ENCODE measurements at regions of chr5 and their contacts with region 1.

Region 1: GRCh38 chr5:99037668-99038067 is 108.9 kb upstream of the CHD1 start:
- DNase-seq: peak; percentile 78 to 85 (median 81)
- H3K4me3 ChIP-seq: peak overlapping the region; percentile 3 to 52
- H3K4me3 Mint-ChIP-seq: peak overlapping the region; percentile 34 to 83 (median 64)
- H3K27ac ChIP-seq: peak overlapping the region; percentile 48
- H3K27ac Mint-ChIP-seq: peak overlapping the region; percentile 83 to 93 (median 89)
- H3K4me1 ChIP-seq: peaks cover 62% of the 10 kb centered on the region
- H3K4me1 Mint-ChIP-seq: peaks cover 48 to 82% (median 61%) of the 10 kb centered on the region in 4 donors
- H3K27me3 ChIP-seq: no peaks in the 10 kb centered on the region
- H3K27me3 Mint-ChIP-seq: no peaks in the 10 kb centered on the region

Region 2: DNA sequence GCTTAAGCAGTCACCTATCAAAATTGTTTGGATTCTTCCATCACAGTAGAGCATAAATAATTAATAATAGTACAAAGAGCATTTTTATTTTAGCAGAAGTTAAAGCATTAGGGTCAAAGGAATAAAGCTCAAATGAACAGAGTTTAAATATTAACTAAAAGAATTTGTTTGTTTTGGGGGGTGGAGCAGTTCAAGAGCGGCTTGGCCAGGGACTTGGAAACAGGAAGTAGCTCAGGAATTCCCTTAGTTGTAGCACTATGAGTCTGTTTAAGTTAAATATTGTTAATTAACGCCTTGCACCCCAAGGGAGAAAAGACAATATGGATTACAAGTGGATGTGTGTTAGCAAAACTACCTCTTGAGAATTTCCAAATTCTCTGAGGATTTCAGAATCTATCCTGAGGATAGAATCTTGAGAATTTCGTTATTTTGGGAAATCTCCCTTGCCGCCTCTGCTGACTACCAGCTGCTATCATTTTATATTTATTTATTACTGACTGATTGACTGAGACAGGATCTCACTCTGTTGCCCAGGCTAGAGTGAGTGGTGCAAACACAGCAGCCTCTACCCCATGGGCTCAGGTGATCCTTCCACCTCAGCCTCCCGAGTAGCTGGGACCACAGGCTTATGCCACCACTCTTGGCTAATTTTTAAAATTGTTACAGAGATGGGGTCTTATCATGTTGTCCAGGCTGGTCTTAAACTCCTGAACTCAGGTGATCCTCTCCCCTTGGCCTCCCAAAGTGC is 12.2 kb before region 1 on chr5:
- CTCF ChIA-PET with region 1: interaction called, 4 read pairs
- POLR2A ChIA-PET with region 1: interaction called, 16 read pairs
- intact Hi-C with region 1: loop called (anchors 2 kb)
- DNase-seq: no peak
- H3K4me3 ChIP-seq: no peak overlapping the region
- H3K4me3 Mint-ChIP-seq: no peak overlapping the region
- H3K27ac ChIP-seq: no peak overlapping the region
- H3K27ac Mint-ChIP-seq: no peak overlapping the region
- H3K4me1 ChIP-seq: peaks cover 17% of the 10 kb centered on the region
- H3K4me1 Mint-ChIP-seq: peaks cover 21 to 38% (median 27%) of the 10 kb centered on the region in 4 donors
- H3K27me3 ChIP-seq: no peaks in the 10 kb centered on the region
- H3K27me3 Mint-ChIP-seq: no peaks in the 10 kb centered on the region

Region 3: DNA sequence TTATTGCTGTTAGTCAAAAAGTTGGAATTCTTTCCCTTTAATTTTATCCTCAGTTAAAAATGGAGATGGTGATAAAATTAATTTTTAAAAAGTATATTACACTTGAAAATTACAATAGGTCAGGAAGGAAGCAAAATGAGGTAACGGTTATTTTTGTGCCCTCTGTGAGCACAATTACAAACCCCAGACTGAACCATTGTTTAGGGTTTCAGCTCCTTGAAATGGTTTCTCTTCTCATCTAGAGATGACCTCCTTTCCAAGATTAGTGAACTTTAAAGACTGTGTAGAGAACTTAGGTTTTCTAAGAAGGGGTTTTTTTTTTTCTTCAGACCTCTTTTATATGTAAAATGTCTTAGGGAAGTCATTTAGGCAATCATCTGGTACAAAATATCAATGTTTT is 17.3 kb after region 1 on chr5:
- CTCF ChIA-PET with region 1: interaction called, 37 read pairs
- POLR2A ChIA-PET with region 1: interaction called, 25 read pairs
- intact Hi-C with region 1: loop called (anchors 1 kb)
- DNase-seq: peak in 3 of 5 donors; percentile 15 to 38 (median 32)
- H3K4me3 ChIP-seq: no peak overlapping the region
- H3K4me3 Mint-ChIP-seq: peak overlapping the region in 3 of 8 donors; percentile 46 to 49 (median 47)
- H3K27ac ChIP-seq: no peak overlapping the region
- H3K27ac Mint-ChIP-seq: peak overlapping the region; percentile 29 to 87 (median 64)
- H3K4me1 ChIP-seq: no peaks in the 10 kb centered on the region
- H3K4me1 Mint-ChIP-seq: peaks cover 6 to 19% (median 13%) of the 10 kb centered on the region in 4 donors
- H3K27me3 ChIP-seq: no peaks in the 10 kb centered on the region
- H3K27me3 Mint-ChIP-seq: no peaks in the 10 kb centered on the region

Region 4: DNA sequence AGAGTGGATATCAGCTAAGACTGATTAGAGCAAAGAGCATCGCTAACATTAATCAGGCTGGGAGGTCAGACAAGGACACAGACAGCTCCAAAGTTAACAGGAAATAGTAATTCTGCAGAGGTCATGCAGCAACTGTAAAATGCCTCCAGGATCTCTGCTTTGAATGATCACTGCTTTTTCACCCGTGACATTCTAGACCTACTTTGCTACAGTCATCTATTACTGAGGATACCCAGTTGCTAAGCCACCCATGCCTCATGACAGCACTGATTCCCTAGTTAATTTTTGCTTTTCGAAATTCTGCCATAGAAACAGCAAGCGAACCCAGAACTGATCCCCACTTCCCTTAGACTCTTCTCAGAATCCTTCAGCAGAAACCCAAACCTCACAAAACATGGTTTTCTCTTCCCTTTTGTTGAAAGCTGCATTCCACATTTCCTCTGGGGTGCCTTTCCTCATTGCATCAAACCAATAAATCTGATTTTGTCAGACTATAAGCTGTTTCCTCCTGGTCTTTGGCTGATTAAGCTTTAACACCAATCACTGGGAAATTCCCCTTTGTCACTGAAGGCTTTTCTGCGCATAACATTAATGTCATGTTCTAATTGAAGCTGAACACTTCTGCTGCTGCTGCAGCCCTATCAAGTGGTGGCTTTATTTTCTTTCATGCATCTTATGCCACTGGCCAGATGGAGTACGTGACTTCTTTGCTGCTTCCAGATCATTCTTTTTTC is 92.3 kb after region 1 on chr5:
- CTCF ChIA-PET with region 1: no interaction called
- POLR2A ChIA-PET with region 1: no interaction called
- intact Hi-C with region 1: no loop called
- DNase-seq: no peak
- H3K4me3 ChIP-seq: no peak overlapping the region
- H3K4me3 Mint-ChIP-seq: no peak overlapping the region
- H3K27ac ChIP-seq: no peak overlapping the region
- H3K27ac Mint-ChIP-seq: no peak overlapping the region
- H3K4me1 ChIP-seq: no peaks in the 10 kb centered on the region
- H3K4me1 Mint-ChIP-seq: peaks cover 0 to 1% (median 0%) of the 10 kb centered on the region in 4 donors
- H3K27me3 ChIP-seq: no peaks in the 10 kb centered on the region
- H3K27me3 Mint-ChIP-seq: peaks cover 2 to 5% of the 10 kb centered on the region in 2 donors

Region 5: GRCh38 chr5:99141534-99142128 is 104.0 kb after region 1 on chr5:
- CTCF ChIA-PET with region 1: no interaction called
- POLR2A ChIA-PET with region 1: no interaction called
- intact Hi-C with region 1: no loop called
- DNase-seq: no peak
- H3K4me3 ChIP-seq: no peak overlapping the region
- H3K4me3 Mint-ChIP-seq: no peak overlapping the region
- H3K27ac ChIP-seq: no peak overlapping the region
- H3K27ac Mint-ChIP-seq: no peak overlapping the region
- H3K4me1 ChIP-seq: no peaks in the 10 kb centered on the region
- H3K4me1 Mint-ChIP-seq: no peaks in the 10 kb centered on the region
- H3K27me3 ChIP-seq: no peaks in the 10 kb centered on the region
- H3K27me3 Mint-ChIP-seq: peaks cover 5 to 8% of the 10 kb centered on the region in 2 donors

Measured in CD4-positive, alpha-beta memory T cell (primary cell).